Adrenal gland (tissue), 19 donors: ENCODE measurements at regions of chr1 and their contacts with region 1.

Region 1: GRCh38 chr1:155001675-155002463 is 733 bp upstream of the ZBTB7B start:
- DNase-seq: peak; percentile 100
- H3K4me3 ChIP-seq: peak overlapping the region; percentile 14 to 73 (median 52)
- H3K27ac ChIP-seq: peak overlapping the region; percentile 87 to 99 (median 96)
- H3K4me1 ChIP-seq: peaks cover 42 to 44% of the 10 kb centered on the region in 2 donors
- H3K27me3 ChIP-seq: no peaks in the 10 kb centered on the region
- CTCF ChIP-seq: peak in 4 of 6 experiments; percentile 17 to 47 (median 26)
- POLR2A ChIP-seq: peak; percentile 45 to 79

Region 2: GRCh38 chr1:154961497-154962262 is 40.2 kb before region 1 on chr1 and contains the start of gene PYGO2:
- intact Hi-C with region 1: loop called (anchors 5 kb)
- DNase-seq: peak; percentile 77 to 88 (median 83)
- H3K4me3 ChIP-seq: peak within 1 kb of the TSS; percentile 45 to 86 (median 71)
- H3K27ac ChIP-seq: peak within 1 kb of the TSS; percentile 94 to 99 (median 96)
- H3K4me1 ChIP-seq: peaks cover 15 to 28% of the 10 kb centered on the region in 2 donors
- H3K27me3 ChIP-seq: no peaks in the 10 kb centered on the region
- CTCF ChIP-seq: peak in 5 of 6 experiments; percentile 33 to 65 (median 62)
- POLR2A ChIP-seq: peak; percentile 65 to 77
- total RNA-seq, gene PYGO2: 26.2 to 61.1 (median 42.6) TPM

Region 3: GRCh38 chr1:154969860-154970452 is 31.9 kb before region 1 on chr1:
- intact Hi-C with region 1: loop called in 1 of 2 experiments (anchors 5 kb)
- DNase-seq: peak in 4 of 7 donors; percentile 48 to 59 (median 54)
- H3K4me3 ChIP-seq: peak overlapping the region in 3 of 4 donors; percentile 7 to 75 (median 8)
- H3K27ac ChIP-seq: peak overlapping the region; percentile 93 to 100 (median 99)
- H3K4me1 ChIP-seq: peaks cover 35 to 50% of the 10 kb centered on the region in 2 donors
- H3K27me3 ChIP-seq: no peaks in the 10 kb centered on the region
- CTCF ChIP-seq: no peak
- POLR2A ChIP-seq: no peak